Right ventricle myocardium inferior (tissue), 1 donor: ENCODE measurements at regions of chr4 and their contacts with region 1.

Region 1: DNA sequence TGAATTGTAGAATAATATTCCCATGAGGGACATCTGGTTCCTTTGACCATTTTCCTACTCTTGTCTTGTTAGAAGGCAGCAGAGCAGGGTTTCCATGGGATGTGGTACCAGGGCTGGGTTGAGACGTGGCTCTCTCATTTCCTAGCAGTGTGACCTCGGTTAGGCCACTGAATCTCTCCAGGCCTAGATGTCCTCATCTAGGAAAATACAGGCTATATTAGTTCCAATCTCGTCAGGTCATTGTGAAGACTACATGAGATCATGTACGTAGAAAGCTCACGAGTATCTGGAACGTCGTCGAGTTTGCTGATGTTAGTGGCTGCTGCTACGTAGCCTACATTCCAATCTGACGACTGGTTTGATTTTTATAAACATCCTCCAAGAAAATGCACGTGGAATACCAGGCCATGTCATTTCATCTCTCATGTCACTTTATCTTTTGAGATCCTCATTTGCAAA is 278.2 kb upstream of the GATB start:
- DNase-seq: no peak
- ATAC-seq: peak; percentile 35

Region 2: GRCh38 chr4:152089584-152089983 is 50.5 kb after region 1 on chr4:
- intact Hi-C with region 1: loop called (anchors 2 kb)
- DNase-seq: no peak
- ATAC-seq: peak; percentile 74

Region 3: GRCh38 chr4:152161676-152162330 is 122.8 kb after region 1 on chr4:
- intact Hi-C with region 1: loop called (anchors 5 kb)
- DNase-seq: no peak
- ATAC-seq: peak; percentile 43